Activated T-helper 1 cell treated with anti-CD3 and anti-CD28 coated beads, Interleukin-12 subunit alpha, Interleukin-12 subunit beta, Interleukin-2, Interleukin-4 antibody, amounts not matched to agents 30 ng/mL and 10 ng/mL and 1 ng/mL, durations not matched to agents 14 hours and 24 hours and 36 hours (primary cell): ENCODE measurements at regions of chr20 and their contacts with region 1.

Region 1: DNA sequence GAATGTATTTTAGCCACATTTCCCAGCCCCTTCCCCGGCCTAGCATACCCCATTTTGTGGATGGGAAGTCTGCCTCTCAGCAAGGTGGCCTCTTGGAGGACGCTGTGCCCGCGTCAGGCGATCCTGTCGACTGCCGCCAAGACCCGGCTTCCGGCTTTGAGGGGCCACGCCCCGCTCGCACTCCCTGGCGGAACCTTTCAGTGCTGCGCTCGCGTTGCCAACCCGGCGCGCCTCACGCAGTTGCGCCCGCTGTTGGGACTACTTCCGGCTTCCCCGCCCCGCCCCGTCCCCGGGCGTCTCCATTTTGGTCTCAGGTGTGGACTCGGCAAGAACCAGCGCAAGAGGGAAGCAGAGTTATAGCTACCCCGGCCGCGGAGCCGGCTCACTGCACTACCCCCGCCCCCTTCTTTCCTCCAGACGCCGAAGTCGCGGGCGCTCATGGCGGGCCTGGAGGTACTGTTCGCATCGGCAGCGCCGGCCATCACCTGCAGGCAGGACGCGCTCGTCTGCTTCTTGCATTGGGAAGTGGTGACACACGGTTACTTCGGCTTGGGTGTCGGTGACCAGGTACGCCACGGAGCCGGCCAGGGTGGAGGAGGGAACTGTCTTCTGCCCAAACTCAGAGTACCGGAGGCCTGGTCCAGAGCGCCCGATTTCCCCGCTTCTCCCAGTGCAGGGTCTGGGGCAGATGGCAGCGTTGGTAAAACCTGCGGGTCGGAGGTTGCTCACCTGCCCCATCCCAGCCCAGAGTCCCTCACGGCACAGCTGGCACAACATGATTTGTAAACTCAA is at the start of gene PSMF1:
- DNase-seq: peak; percentile 95
- H3K4me3 Mint-ChIP-seq: peak within 1 kb of the TSS; percentile 91
- H3K27ac Mint-ChIP-seq: peak within 1 kb of the TSS; percentile 81
- H3K4me1 Mint-ChIP-seq: peaks cover 56% of the 10 kb centered on the region
- H3K27me3 Mint-ChIP-seq: no peaks in the 10 kb centered on the region
- total RNA-seq, gene PSMF1: 185 and 189 TPM in 2 replicates

Region 2: DNA sequence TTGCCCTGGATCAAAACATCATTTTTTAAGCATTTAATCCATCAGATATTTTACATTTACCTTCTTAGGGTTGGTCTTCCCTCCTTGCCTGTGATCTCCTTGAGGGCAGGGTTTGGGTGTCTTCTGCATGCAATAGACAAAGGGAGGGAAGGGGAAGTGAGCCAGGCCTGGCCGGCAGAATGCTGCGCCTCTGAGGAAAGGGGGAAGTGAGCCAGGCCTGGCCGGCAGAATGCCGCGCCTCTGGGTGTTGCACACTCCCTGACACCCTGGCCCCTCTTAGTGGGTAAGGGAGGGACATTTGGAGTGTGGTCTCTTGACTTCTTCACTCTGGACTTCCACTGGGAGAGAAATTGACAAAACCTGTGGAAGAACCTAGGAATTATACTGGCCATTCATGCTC is 12.3 kb after region 1 on chr20:
- intact Hi-C with region 1: no loop called
- DNase-seq: no peak
- H3K4me3 Mint-ChIP-seq: no peak overlapping the region
- H3K27ac Mint-ChIP-seq: no peak overlapping the region
- H3K4me1 Mint-ChIP-seq: peaks cover 26% of the 10 kb centered on the region
- H3K27me3 Mint-ChIP-seq: no peaks in the 10 kb centered on the region

Region 3: DNA sequence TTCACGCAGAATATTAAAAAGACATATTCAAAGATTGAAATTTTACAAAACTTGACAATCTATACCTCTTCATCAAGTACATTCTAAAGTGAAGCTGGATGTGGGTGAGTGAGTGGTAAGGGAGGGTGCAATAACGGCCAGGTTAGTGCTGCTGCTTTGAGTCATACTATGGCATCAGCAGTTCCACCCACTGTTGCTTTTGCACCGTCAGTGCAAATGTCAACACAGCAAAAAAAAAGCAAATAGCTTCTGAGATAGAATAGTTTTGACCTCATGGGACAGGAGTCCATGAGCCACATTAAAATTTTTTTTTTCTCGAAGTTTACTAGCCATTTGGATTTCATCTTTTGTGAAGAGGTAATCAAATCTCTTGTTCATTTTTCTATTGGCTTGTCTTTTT is 31.7 kb after region 1 on chr20:
- intact Hi-C with region 1: loop called (anchors 2 kb)
- DNase-seq: no peak
- H3K4me3 Mint-ChIP-seq: no peak overlapping the region
- H3K27ac Mint-ChIP-seq: no peak overlapping the region
- H3K4me1 Mint-ChIP-seq: peaks cover 27% of the 10 kb centered on the region
- H3K27me3 Mint-ChIP-seq: no peaks in the 10 kb centered on the region

Region 4: GRCh38 chr20:1185790-1186334 is 67.3 kb after region 1 on chr20:
- intact Hi-C with region 1: loop called (anchors 1 kb)
- DNase-seq: peak; percentile 43
- H3K4me3 Mint-ChIP-seq: peak overlapping the region; percentile 71
- H3K27ac Mint-ChIP-seq: no peak overlapping the region
- H3K4me1 Mint-ChIP-seq: peaks cover 6% of the 10 kb centered on the region
- H3K27me3 Mint-ChIP-seq: peaks cover 34% of the 10 kb centered on the region

Region 5: DNA sequence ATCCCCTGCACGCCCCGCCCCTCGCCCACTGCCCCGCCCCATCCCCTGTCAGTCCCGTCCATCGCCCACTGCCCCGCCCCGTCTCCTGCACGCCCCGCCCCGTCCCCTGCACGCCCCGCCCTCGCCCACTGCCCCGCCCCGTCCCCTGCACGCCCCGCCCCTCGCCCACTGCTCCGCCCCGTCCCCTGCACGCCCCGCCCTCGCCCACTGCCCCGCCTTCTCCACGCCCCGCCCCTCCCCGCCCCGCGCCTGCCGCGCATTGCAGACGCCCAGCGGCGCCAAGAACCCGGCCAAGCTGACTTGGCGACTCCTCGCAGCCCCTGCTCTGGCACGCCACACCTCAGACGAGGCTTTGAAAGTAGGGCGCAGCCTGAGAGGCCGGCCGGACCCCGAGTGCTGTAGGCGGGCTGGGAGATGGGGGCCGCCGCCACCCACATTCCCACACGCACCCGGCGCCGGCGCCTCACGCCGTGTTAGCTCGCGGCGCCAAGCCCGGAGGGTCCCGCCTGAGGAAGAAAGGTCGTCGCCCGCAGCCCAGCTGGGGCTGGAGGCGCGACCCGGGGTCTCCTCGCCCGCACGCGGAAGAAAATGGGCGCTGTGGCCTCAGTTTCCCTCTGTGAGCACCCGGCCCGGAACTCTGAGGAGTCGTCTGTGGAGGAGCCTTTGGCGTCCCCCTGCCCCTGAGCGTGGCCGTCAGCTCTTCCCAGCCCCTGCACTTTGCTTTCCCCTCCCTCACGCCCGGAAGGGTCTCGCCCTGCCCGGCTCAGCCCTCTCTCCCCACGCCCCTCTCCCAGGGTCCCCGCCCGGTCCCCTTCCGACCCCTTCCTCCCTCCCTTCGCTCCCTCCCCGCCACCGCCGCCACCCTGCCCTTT is 107.5 kb after region 1 on chr20 and contains the start of gene RAD21L1:
- intact Hi-C with region 1: loop called (anchors 1 kb)
- DNase-seq: peak; percentile 57
- H3K4me3 Mint-ChIP-seq: peak within 1 kb of the TSS; percentile 84
- H3K27ac Mint-ChIP-seq: no peak within 1 kb of the TSS
- H3K4me1 Mint-ChIP-seq: peaks cover 7% of the 10 kb centered on the region
- H3K27me3 Mint-ChIP-seq: peaks cover 36% of the 10 kb centered on the region
- total RNA-seq, gene RAD21L1: not detected in 2 replicates

Region 6: DNA sequence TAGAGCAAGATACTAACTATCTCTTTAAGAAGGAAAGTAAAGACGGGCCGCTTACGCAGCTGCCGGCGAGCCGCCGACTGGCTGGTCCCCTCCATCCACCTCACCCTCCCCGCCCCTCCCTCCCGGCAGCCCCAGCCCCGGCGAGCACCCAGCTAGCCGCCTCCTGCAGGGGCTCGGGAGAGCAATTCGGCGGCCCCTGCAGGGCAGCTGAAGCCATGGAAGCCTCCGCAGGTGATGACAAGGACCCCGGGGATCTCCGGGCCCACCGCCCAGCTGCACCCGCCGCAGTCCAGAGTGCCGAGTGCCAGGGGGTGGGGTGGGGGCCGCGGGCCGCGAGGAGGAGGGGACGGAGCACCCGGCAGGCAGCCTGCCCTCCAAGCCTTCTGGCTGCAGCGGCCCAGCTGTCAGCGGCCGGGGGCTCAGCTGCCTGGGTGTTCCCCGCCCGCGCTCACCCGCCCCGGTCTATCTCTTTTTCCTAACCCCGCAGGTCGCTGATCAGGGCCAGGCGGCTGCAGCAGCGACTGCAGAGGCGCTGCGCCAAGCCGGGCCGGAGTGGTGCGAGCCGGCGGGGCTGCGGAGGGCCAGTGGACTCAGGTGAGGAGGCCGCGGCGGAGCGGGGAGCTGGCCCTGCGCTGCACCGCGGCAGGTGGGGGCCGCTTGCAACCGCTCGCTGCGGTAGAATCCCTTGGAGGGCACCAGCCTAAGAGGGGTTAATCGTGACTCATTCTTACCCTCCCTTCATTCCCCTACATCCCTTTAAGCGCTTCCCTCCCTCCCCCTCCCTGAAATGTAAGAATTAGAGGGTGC is 147.8 kb after region 1 on chr20 and contains the start of gene SNPH:
- intact Hi-C with region 1: loop called (anchors 2 kb)
- DNase-seq: peak; percentile 63
- H3K4me3 Mint-ChIP-seq: peak within 1 kb of the TSS; percentile 89
- H3K27ac Mint-ChIP-seq: peak within 1 kb of the TSS; percentile 87
- H3K4me1 Mint-ChIP-seq: peaks cover 32% of the 10 kb centered on the region
- H3K27me3 Mint-ChIP-seq: peaks cover 3% of the 10 kb centered on the region
- total RNA-seq, gene SNPH: 2.1 and 2.5 TPM in 2 replicates